ENCODE measurements at regions of chr10 and their contacts with region 1.

Region 1: GRCh38 chr10:96374985-96375830 is 16.4 kb upstream of the OPALIN start:
- DNase-seq: peak; percentile 92
- ATAC-seq: peak; percentile 86
- H3K4me3 Mint-ChIP-seq: peak overlapping the region; percentile 67
- H3K27ac Mint-ChIP-seq: no peak overlapping the region
- H3K4me1 Mint-ChIP-seq: peaks cover 23% of the 10 kb centered on the region
- H3K27me3 Mint-ChIP-seq: peaks cover 7% of the 10 kb centered on the region
- CTCF ChIP-seq: peak; percentile 78

Region 2: DNA sequence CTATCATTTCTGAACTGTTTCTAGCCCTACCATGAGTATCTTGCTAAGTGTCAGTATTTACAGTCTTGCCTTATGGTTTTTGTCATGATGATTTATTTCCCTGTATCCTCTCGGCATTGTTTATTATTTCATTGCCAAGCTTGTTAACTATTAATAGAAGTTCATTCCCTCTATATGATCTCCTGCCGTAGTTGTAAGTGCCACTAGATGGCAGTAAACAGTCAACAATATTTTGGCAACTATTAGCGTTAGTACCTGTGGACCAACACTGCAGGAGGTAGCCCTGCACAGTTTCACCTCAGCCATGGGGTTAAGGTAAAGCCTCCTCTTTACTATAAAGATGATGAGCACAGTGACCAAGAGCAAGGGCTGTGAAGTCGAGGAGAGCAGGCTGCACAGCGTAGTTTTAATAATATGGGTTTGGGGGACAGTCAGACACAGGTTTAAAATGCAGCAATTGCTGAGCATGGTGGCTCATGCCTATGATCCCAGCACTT is 358.0 kb before region 1 on chr10:
- CTCF ChIA-PET with region 1: interaction called, 19 read pairs
- POLR2A ChIA-PET with region 1: no interaction called
- DNase-seq: peak; percentile 29
- ATAC-seq: peak; percentile 94
- H3K4me3 Mint-ChIP-seq: no peak overlapping the region
- H3K27ac Mint-ChIP-seq: no peak overlapping the region
- H3K4me1 Mint-ChIP-seq: no peaks in the 10 kb centered on the region
- H3K27me3 Mint-ChIP-seq: no peaks in the 10 kb centered on the region
- CTCF ChIP-seq: peak; percentile 53; the same call in 1 of the 2 replicates

Region 3: GRCh38 chr10:96339957-96340904 is 35.0 kb before region 1 on chr10:
- CTCF ChIA-PET with region 1: interaction called, 39 read pairs
- POLR2A ChIA-PET with region 1: no interaction called
- DNase-seq: peak; percentile 79
- ATAC-seq: peak; percentile 72
- H3K4me3 Mint-ChIP-seq: no peak overlapping the region
- H3K27ac Mint-ChIP-seq: no peak overlapping the region
- H3K4me1 Mint-ChIP-seq: peaks cover 59% of the 10 kb centered on the region
- H3K27me3 Mint-ChIP-seq: peaks cover 24% of the 10 kb centered on the region
- CTCF ChIP-seq: peak; percentile 71

Region 4: GRCh38 chr10:96395931-96396877 is 21.0 kb after region 1 on chr10:
- CTCF ChIA-PET with region 1: interaction called, 41 read pairs
- POLR2A ChIA-PET with region 1: no interaction called
- DNase-seq: peak; percentile 77
- ATAC-seq: peak; percentile 87
- H3K4me3 Mint-ChIP-seq: peak overlapping the region; percentile 62
- H3K27ac Mint-ChIP-seq: no peak overlapping the region
- H3K4me1 Mint-ChIP-seq: peaks cover 24% of the 10 kb centered on the region
- H3K27me3 Mint-ChIP-seq: no peaks in the 10 kb centered on the region
- CTCF ChIP-seq: peak; percentile 82

Region 5: DNA sequence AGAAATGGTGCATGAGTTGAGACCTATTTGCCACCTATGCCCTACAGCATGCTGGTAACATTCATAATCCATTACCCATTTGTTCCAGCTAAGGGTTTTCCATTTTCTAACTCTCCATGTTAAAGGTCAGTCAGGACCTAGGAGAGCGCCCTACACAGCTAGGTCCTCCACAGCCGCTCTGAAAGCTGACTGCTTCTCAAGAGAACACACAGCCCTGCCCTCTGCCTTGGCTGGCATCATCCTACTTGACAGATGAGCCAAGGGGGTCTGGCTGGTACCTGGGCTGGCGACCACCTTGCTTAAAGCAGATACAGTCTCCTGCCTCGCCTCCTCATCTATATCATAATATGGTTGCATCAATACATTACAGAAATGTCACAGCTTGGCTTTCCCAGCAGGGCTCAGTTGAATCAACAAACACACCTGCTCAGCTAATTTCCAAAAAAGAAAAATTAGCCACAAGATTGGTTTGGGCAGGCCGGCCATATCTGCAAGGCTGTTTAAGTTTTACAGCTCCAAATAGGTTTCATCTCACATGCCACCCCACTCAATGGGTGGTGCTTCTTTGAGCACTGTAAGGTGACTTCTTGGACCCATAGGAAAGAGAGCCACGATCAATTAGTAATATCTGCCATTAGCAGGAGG is 121.2 kb after region 1 on chr10:
- CTCF ChIA-PET with region 1: interaction called, 13 read pairs
- POLR2A ChIA-PET with region 1: interaction called, 5 read pairs
- DNase-seq: peak; percentile 30
- ATAC-seq: peak; percentile 80
- H3K4me3 Mint-ChIP-seq: no peak overlapping the region
- H3K27ac Mint-ChIP-seq: no peak overlapping the region
- H3K4me1 Mint-ChIP-seq: peaks cover 36% of the 10 kb centered on the region
- H3K27me3 Mint-ChIP-seq: no peaks in the 10 kb centered on the region; the same call in 1 of the 2 replicates
- CTCF ChIP-seq: no peak

Region 6: GRCh38 chr10:96639899-96640298 is 264.7 kb after region 1 on chr10:
- CTCF ChIA-PET with region 1: interaction called, 10 read pairs
- POLR2A ChIA-PET with region 1: no interaction called
- DNase-seq: no peak
- ATAC-seq: no peak
- H3K4me3 Mint-ChIP-seq: no peak overlapping the region
- H3K27ac Mint-ChIP-seq: no peak overlapping the region
- H3K4me1 Mint-ChIP-seq: no peaks in the 10 kb centered on the region
- H3K27me3 Mint-ChIP-seq: no peaks in the 10 kb centered on the region
- CTCF ChIP-seq: no peak